ENCODE measurements at regions of chr1 and their contacts with region 1.

Region 1: GRCh38 chr1:56074007-56074651 is 505.2 kb downstream of the PLPP3 start:
- DNase-seq: no peak
- ATAC-seq: no peak
- H3K4me3 ChIP-seq: no peak overlapping the region
- H3K4me3 Mint-ChIP-seq: no peak overlapping the region
- H3K27ac ChIP-seq: no peak overlapping the region
- H3K27ac Mint-ChIP-seq: no peak overlapping the region
- H3K4me1 ChIP-seq: no peaks in the 10 kb centered on the region
- H3K4me1 Mint-ChIP-seq: no peaks in the 10 kb centered on the region
- H3K27me3 ChIP-seq: no peaks in the 10 kb centered on the region
- H3K27me3 Mint-ChIP-seq: no peaks in the 10 kb centered on the region
- CTCF ChIP-seq: no peak

Region 2: GRCh38 chr1:55483523-55483922 is 590.6 kb before region 1 on chr1:
- CTCF ChIA-PET with region 1: no interaction called
- POLR2A ChIA-PET with region 1: no interaction called
- intact Hi-C with region 1: no loop called
- DNase-seq: no peak
- ATAC-seq: no peak
- H3K4me3 ChIP-seq: no peak overlapping the region
- H3K4me3 Mint-ChIP-seq: no peak overlapping the region
- H3K27ac ChIP-seq: no peak overlapping the region
- H3K27ac Mint-ChIP-seq: no peak overlapping the region
- H3K4me1 ChIP-seq: no peaks in the 10 kb centered on the region
- H3K4me1 Mint-ChIP-seq: no peaks in the 10 kb centered on the region
- H3K27me3 ChIP-seq: no peaks in the 10 kb centered on the region
- H3K27me3 Mint-ChIP-seq: no peaks in the 10 kb centered on the region
- CTCF ChIP-seq: no peak

Region 3: DNA sequence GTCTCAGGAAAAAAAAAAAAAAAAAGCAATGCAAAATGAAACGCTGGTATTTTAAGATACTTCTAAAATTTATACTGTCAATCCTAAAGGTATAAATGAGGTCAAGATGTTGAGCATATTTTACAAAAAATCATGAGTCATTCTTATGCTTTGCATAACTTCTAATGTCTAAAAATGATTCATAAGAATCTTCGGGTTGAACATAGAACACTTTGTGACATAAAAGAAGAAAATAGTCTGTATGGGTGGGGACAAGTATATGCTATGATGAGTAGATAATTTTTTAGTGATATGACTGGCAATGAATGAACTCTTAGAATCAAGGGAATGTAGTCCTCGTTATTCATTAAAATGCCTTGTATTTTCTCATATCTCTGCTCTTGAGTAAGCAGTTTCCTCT is 442.1 kb before region 1 on chr1:
- CTCF ChIA-PET with region 1: no interaction called
- POLR2A ChIA-PET with region 1: no interaction called
- intact Hi-C with region 1: loop called in 1 of 2 experiments (anchors 5 kb)
- DNase-seq: no peak
- ATAC-seq: no peak
- H3K4me3 ChIP-seq: no peak overlapping the region
- H3K4me3 Mint-ChIP-seq: no peak overlapping the region
- H3K27ac ChIP-seq: no peak overlapping the region
- H3K27ac Mint-ChIP-seq: no peak overlapping the region
- H3K4me1 ChIP-seq: no peaks in the 10 kb centered on the region
- H3K4me1 Mint-ChIP-seq: no peaks in the 10 kb centered on the region
- H3K27me3 ChIP-seq: no peaks in the 10 kb centered on the region
- H3K27me3 Mint-ChIP-seq: peaks cover 17% of the 10 kb centered on the region
- CTCF ChIP-seq: no peak

Measured in CD8-positive, alpha-beta T cell (primary cell).